CD4-positive, alpha-beta memory T cell (primary cell): ENCODE measurements at regions of chr22 and their contacts with region 1.

Region 1: GRCh38 chr22:23178512-23179254 is 1.6 kb upstream of the BCR start:
- DNase-seq: peak in 4 of 5 donors; percentile 57
- H3K4me3 ChIP-seq: no peak overlapping the region
- H3K4me3 Mint-ChIP-seq: peak overlapping the region; percentile 63 to 84 (median 82)
- H3K27ac ChIP-seq: peak overlapping the region; percentile 27
- H3K27ac Mint-ChIP-seq: peak overlapping the region; percentile 88 to 95 (median 90)
- H3K4me1 ChIP-seq: peaks cover 70% of the 10 kb centered on the region
- H3K4me1 Mint-ChIP-seq: peaks cover 39 to 60% (median 52%) of the 10 kb centered on the region in 4 donors
- H3K27me3 ChIP-seq: no peaks in the 10 kb centered on the region
- H3K27me3 Mint-ChIP-seq: no peaks in the 10 kb centered on the region

Region 2: GRCh38 chr22:23144932-23145873 is 33.5 kb before region 1 on chr22 and contains the start of gene RAB36:
- CTCF ChIA-PET with region 1: interaction called, 13 read pairs
- POLR2A ChIA-PET with region 1: interaction called, 15 read pairs
- intact Hi-C with region 1: loop called (anchors 1 kb)
- DNase-seq: peak; percentile 91 to 98 (median 93)
- H3K4me3 ChIP-seq: peak within 1 kb of the TSS in 1 of 2 donors; percentile 38
- H3K4me3 Mint-ChIP-seq: peak within 1 kb of the TSS; percentile 80 to 90 (median 83)
- H3K27ac ChIP-seq: peak within 1 kb of the TSS; percentile 73
- H3K27ac Mint-ChIP-seq: peak within 1 kb of the TSS; percentile 96 to 99 (median 98)
- H3K4me1 ChIP-seq: peaks cover 52% of the 10 kb centered on the region
- H3K4me1 Mint-ChIP-seq: peaks cover 29 to 64% (median 45%) of the 10 kb centered on the region in 4 donors
- H3K27me3 ChIP-seq: no peaks in the 10 kb centered on the region
- H3K27me3 Mint-ChIP-seq: no peaks in the 10 kb centered on the region
- total RNA-seq, gene RAB36: 0.33 to 0.64 TPM

Region 3: DNA sequence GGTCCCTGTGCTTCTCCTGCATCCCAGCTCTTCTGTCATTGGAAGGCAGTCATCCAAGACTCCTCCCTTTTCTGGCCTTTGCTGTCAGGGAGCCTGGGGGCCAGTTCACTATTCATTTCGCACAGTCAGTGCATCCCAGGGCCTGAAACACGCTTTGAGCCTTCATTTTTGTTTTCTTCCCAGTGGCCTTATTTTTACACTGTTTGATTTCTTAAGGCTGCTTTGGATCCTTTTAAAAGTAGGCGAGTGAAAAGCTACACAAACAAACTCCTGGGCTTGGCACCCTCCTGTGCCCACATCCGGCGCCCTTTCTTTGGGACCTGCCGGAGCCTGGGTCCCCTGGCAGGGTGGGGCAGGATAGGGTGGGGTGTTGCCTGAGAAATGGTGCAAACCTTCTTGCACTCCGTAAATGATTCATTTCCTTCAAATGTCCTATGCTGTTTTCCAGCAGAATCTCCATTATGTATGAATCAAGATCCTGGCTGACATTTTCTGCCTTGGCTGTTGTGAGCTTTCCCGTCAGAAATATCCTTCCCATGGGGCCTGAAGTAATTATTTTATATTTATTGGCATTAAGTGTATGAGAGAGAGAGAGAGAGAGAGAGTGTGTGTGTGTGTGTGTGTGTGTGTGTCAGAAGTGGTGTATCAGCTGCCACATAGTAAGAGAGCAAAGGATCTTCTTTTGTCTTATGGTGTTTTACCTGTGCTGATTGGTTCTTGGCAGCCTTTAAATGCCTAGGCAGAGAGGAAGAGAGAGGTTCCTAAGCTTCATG is 47.2 kb after region 1 on chr22:
- CTCF ChIA-PET with region 1: interaction called, 3 read pairs
- POLR2A ChIA-PET with region 1: interaction called, 31 read pairs
- intact Hi-C with region 1: no loop called
- DNase-seq: peak; percentile 55 to 76 (median 60)
- H3K4me3 ChIP-seq: peak overlapping the region in 1 of 2 donors; percentile 21
- H3K4me3 Mint-ChIP-seq: peak overlapping the region; percentile 51 to 87 (median 74)
- H3K27ac ChIP-seq: peak overlapping the region; percentile 43
- H3K27ac Mint-ChIP-seq: peak overlapping the region; percentile 86 to 97 (median 92)
- H3K4me1 ChIP-seq: peaks cover 90% of the 10 kb centered on the region
- H3K4me1 Mint-ChIP-seq: peaks cover 41 to 99% (median 81%) of the 10 kb centered on the region in 4 donors
- H3K27me3 ChIP-seq: no peaks in the 10 kb centered on the region
- H3K27me3 Mint-ChIP-seq: no peaks in the 10 kb centered on the region

Region 4: GRCh38 chr22:23281406-23282088 is 102.9 kb after region 1 on chr22:
- CTCF ChIA-PET with region 1: interaction called, 423 read pairs
- POLR2A ChIA-PET with region 1: interaction called, 24 read pairs
- intact Hi-C with region 1: loop called (anchors 1 kb)
- DNase-seq: peak; percentile 70 to 79 (median 74)
- H3K4me3 ChIP-seq: no peak overlapping the region
- H3K4me3 Mint-ChIP-seq: no peak overlapping the region
- H3K27ac ChIP-seq: no peak overlapping the region
- H3K27ac Mint-ChIP-seq: peak overlapping the region in 3 of 7 donors; percentile 42 to 70 (median 52)
- H3K4me1 ChIP-seq: peaks cover 11% of the 10 kb centered on the region
- H3K4me1 Mint-ChIP-seq: peaks cover 6 to 38% (median 14%) of the 10 kb centered on the region in 4 donors
- H3K27me3 ChIP-seq: no peaks in the 10 kb centered on the region
- H3K27me3 Mint-ChIP-seq: no peaks in the 10 kb centered on the region

Region 5: GRCh38 chr22:23385291-23386244 is 206.9 kb after region 1 on chr22:
- CTCF ChIA-PET with region 1: interaction called, 22 read pairs
- POLR2A ChIA-PET with region 1: no interaction called
- intact Hi-C with region 1: loop called (anchors 1 kb)
- DNase-seq: peak; percentile 66 to 76 (median 68)
- H3K4me3 ChIP-seq: no peak overlapping the region
- H3K4me3 Mint-ChIP-seq: no peak overlapping the region
- H3K27ac ChIP-seq: no peak overlapping the region
- H3K27ac Mint-ChIP-seq: no peak overlapping the region
- H3K4me1 ChIP-seq: peaks cover 4% of the 10 kb centered on the region
- H3K4me1 Mint-ChIP-seq: no peaks in the 10 kb centered on the region
- H3K27me3 ChIP-seq: no peaks in the 10 kb centered on the region
- H3K27me3 Mint-ChIP-seq: peaks cover 0 to 8% of the 10 kb centered on the region in 2 donors

Region 6: DNA sequence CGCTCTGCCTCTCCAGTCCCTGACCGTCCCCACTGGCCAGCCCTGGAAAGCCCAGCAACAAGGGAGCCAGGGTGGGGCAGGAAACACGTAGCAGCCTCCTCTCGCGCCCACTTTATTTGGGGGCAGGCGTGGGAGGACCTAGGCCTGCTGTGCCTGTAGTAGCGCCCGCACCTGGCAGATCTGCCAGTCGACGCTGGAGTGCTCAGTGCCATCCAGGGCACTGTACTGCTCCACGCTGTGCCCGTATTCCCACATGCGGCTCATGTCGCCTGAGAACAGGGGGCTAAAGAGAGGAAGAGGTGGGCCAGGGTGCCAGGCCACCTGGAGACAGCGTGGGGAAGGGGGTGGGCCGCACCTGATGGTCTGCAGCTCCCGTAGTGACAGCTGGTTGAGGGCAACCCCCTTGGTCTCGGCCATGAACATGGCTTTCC is 470.4 kb after region 1 on chr22:
- CTCF ChIA-PET with region 1: no interaction called
- POLR2A ChIA-PET with region 1: no interaction called
- intact Hi-C with region 1: no loop called
- DNase-seq: no peak
- H3K4me3 ChIP-seq: no peak overlapping the region
- H3K4me3 Mint-ChIP-seq: no peak overlapping the region
- H3K27ac ChIP-seq: no peak overlapping the region
- H3K27ac Mint-ChIP-seq: no peak overlapping the region
- H3K4me1 ChIP-seq: no peaks in the 10 kb centered on the region
- H3K4me1 Mint-ChIP-seq: no peaks in the 10 kb centered on the region
- H3K27me3 ChIP-seq: no peaks in the 10 kb centered on the region
- H3K27me3 Mint-ChIP-seq: no peaks in the 10 kb centered on the region